ENCODE measurements at regions of chr6 and their contacts with region 1.

Region 1: GRCh38 chr6:89610149-89610642 is 28.4 kb downstream of the LYRM2 start:
- DNase-seq: peak in 3 of 5 donors; percentile 16 to 37 (median 29)
- H3K4me3 ChIP-seq: no peak overlapping the region
- H3K27ac ChIP-seq: no peak overlapping the region
- H3K4me1 ChIP-seq: no peaks in the 10 kb centered on the region
- H3K27me3 ChIP-seq: no peaks in the 10 kb centered on the region
- CTCF ChIP-seq: peak; percentile 60

Region 2: GRCh38 chr6:89432875-89433251 is 177.3 kb before region 1 on chr6 and contains the start of gene ANKRD6:
- intact Hi-C with region 1: loop called (anchors 10 kb)
- DNase-seq: peak; percentile 76 to 88 (median 86)
- H3K4me3 ChIP-seq: peak within 1 kb of the TSS; percentile 32 to 76 (median 67)
- H3K27ac ChIP-seq: peak within 1 kb of the TSS in 1 of 2 donors; percentile 10
- H3K4me1 ChIP-seq: peaks cover 2 to 10% (median 7%) of the 10 kb centered on the region in 3 donors
- H3K27me3 ChIP-seq: no peaks in the 10 kb centered on the region
- CTCF ChIP-seq: peak; percentile 99
- total RNA-seq, gene ANKRD6: 29.5 TPM

Region 3: DNA sequence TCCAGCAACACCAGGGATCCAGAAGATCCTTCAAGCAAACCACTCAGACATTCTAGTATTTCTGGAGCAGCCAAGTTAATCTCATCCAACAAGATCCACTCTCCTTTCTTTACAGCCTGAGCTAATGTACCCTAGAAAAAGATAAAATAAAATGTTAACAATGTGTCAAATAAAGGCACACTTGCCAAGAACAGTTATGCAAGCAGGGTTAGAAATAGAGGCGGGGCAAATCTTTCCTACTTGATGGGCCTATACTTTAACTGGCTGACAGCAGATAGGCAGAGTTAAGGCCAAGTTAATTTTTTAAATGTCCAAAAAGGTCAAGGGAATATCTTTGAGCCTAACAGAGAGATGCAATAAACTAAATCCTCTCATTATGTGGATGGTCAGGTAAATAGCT is 148.6 kb after region 1 on chr6:
- intact Hi-C with region 1: no loop called
- DNase-seq: no peak
- H3K4me3 ChIP-seq: no peak overlapping the region
- H3K27ac ChIP-seq: no peak overlapping the region
- H3K4me1 ChIP-seq: no peaks in the 10 kb centered on the region
- H3K27me3 ChIP-seq: no peaks in the 10 kb centered on the region
- CTCF ChIP-seq: no peak